ENCODE measurements at regions of chr10 and their contacts with region 1.

Region 1: GRCh38 chr10:68074775-68075549 is at the start of gene HERC4:
- DNase-seq: peak; percentile 92
- H3K4me3 ChIP-seq: peak within 1 kb of the TSS; percentile 89 to 99 (median 99)
- H3K27ac ChIP-seq: peak within 1 kb of the TSS; percentile 90
- H3K4me1 ChIP-seq: peaks cover 10% of the 10 kb centered on the region
- H3K27me3 ChIP-seq: no peaks in the 10 kb centered on the region
- CTCF ChIP-seq: no peak
- total RNA-seq, gene HERC4: 79.4 to 88.7 TPM

Region 2: GRCh38 chr10:67849331-67850011 is 225.5 kb before region 1 on chr10:
- CTCF ChIA-PET with region 1: no interaction called
- dilution Hi-C with region 1: no loop called
- in situ Hi-C with region 1: no loop called
- intact Hi-C with region 1: loop called (anchors 2 kb)
- DNase-seq: peak; percentile 84
- H3K4me3 ChIP-seq: peak overlapping the region; percentile 77 to 86 (median 80)
- H3K27ac ChIP-seq: peak overlapping the region; percentile 67
- H3K4me1 ChIP-seq: no peaks in the 10 kb centered on the region
- H3K27me3 ChIP-seq: no peaks in the 10 kb centered on the region
- CTCF ChIP-seq: no peak

Region 3: DNA sequence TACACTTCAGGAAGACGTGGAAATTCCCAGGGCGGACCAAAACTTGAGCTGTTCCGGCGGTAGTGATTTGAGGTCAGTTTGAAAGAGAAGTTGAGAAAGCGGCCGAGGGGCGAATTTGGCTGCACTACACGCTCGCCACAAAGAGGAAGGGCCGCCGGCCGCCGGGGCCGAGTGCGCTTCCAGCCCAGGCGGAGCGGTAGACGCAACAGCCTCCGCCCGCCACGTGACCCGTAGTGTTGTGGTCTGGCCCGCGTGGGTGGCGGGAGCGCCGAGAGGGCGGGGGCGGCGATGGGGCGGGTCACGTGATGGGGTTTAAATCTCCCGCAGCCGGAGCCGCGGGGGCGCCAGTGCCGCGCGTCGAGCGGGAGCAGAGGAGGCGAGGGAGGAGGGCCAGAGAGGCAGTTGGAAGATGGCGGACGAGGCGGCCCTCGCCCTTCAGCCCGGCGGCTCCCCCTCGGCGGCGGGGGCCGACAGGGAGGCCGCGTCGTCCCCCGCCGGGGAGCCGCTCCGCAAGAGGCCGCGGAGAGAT is 190.6 kb before region 1 on chr10 and contains the start of gene SIRT1:
- CTCF ChIA-PET with region 1: no interaction called
- dilution Hi-C with region 1: no loop called
- in situ Hi-C with region 1: no loop called
- intact Hi-C with region 1: loop called (anchors 2 kb)
- DNase-seq: peak; percentile 87
- H3K4me3 ChIP-seq: peak within 1 kb of the TSS; percentile 83 to 89 (median 84)
- H3K27ac ChIP-seq: peak within 1 kb of the TSS; percentile 68
- H3K4me1 ChIP-seq: peaks cover 5% of the 10 kb centered on the region
- H3K27me3 ChIP-seq: no peaks in the 10 kb centered on the region
- CTCF ChIP-seq: no peak
- total RNA-seq, gene SIRT1: 12.3 to 14.5 TPM